ENCODE measurements at regions of chr11 and their contacts with region 1.

Region 1: DNA sequence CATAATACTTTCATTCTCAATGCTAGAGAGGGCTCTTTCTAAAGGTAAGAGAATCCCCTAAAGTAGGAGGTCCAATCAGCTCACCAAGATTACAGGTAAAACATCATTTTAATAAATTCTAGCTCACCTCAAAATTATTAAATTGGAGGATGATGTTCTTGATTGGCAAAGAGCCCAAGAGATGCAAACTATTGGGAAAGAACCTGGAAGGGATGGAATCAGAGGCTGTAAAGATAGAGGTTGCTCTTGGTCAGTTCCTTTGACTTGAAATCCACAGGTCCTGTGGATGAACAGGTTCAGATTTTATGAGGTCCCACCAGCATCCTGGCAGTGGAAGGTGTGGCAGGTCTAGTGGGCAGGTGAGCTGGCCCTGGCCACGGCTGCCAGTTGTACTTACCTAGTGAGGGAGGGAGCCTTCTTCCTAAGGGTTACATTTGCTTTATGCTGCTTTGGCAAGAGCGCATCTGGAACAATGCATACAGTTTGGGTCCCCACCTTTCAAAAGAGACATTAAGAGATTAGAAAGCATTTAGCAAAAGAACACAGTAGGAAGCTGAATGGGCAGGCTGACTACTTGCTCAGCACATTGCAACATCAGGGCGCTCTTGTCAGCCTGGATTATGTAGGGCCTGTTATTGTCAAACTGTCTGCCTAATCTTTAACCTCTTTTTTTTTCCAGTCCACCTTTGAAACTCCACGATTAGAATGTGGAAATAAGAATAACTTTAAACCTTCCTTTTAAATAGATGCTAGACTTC is 97.1 kb downstream of the RDX start:
- DNase-seq: no peak
- H3K4me3 ChIP-seq: no peak overlapping the region
- H3K27ac ChIP-seq: no peak overlapping the region
- H3K27me3 ChIP-seq: no peaks in the 10 kb centered on the region
- CTCF ChIP-seq: no peak

Region 2: DNA sequence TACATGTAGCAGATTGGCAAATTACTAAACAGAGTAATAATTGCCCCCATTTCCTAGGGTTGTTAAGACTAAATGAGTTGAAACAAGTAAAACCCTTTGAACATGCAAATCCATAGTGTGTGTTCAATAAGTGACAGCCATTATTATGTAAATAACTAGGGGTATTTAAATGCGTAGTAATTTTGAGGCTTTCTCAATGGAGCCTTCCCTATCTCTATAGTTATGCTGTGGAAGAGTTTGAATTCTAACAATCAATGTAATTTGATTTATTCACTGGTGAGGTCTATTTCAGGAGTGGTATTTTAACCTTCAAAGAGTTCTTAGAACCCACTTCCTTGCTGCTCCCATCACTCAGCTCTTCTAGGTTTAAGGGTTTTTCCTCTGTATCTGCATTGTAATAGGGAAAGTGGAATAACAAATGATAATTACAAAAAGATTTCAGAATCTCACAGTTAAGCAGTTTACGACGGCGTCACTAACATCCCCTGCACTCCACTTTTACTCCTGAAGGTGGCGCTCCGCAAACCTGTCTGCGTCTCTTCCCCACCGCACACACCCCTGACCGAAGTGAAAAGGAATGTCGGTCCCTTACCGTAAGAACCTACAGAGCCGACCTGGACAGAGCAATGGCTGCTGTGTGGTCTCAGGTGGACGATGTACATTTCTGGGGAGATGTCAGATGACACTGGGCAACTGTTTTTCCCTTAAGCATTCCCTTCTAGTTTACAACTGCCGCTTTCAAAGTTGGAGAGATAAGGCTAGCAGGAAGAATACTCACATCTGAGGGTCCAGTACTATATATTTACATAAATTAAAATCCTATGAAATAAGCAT is 25.3 kb before region 1 on chr11:
- CTCF ChIA-PET with region 1: interaction called, 18 read pairs
- POLR2A ChIA-PET with region 1: no interaction called
- DNase-seq: no peak
- H3K4me3 ChIP-seq: no peak overlapping the region
- H3K27ac ChIP-seq: no peak overlapping the region
- H3K27me3 ChIP-seq: no peaks in the 10 kb centered on the region
- CTCF ChIP-seq: peak; percentile 82

Region 3: GRCh38 chr11:110230377-110230776 is 31.0 kb after region 1 on chr11:
- CTCF ChIA-PET with region 1: interaction called, 12 read pairs
- POLR2A ChIA-PET with region 1: no interaction called
- DNase-seq: no peak
- H3K4me3 ChIP-seq: no peak overlapping the region
- H3K27ac ChIP-seq: no peak overlapping the region
- H3K27me3 ChIP-seq: no peaks in the 10 kb centered on the region
- CTCF ChIP-seq: no peak

Region 4: DNA sequence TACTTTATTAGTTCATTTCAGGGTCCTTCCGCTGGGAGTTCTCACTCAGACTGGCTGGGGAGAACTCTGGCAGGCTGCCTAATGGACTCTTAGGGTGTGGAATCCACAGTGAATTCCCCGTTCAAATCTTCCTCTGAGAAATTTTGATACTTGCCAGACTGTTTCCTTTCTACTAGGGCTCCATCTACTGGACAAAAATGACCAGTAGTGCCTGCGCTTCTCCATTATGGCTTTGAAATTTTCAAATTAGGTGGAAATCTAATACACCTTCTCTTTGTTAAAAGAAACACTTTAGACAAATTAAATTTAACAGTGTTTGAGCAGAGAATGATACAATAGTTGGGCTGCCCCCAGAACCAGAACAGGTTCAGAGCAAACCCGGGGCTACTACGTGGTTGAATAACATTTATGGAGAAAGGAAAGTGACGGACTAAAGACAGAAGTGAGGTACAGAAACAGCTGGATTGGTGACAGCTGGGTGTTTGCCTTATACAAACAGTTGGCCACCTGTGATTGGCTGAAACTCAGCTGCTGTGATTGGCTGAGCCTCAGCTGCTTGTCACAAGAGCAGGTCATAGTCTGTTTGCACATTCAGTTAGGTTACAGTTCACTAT is 177.5 kb after region 1 on chr11:
- CTCF ChIA-PET with region 1: interaction called, 82 read pairs
- POLR2A ChIA-PET with region 1: no interaction called
- DNase-seq: peak; percentile 50
- H3K4me3 ChIP-seq: no peak overlapping the region
- H3K27ac ChIP-seq: no peak overlapping the region
- H3K27me3 ChIP-seq: no peaks in the 10 kb centered on the region
- CTCF ChIP-seq: peak; percentile 87